Left ventricle myocardium inferior (tissue), 1 donor: ENCODE measurements at regions of chr7 and their contacts with region 1.

Region 1: DNA sequence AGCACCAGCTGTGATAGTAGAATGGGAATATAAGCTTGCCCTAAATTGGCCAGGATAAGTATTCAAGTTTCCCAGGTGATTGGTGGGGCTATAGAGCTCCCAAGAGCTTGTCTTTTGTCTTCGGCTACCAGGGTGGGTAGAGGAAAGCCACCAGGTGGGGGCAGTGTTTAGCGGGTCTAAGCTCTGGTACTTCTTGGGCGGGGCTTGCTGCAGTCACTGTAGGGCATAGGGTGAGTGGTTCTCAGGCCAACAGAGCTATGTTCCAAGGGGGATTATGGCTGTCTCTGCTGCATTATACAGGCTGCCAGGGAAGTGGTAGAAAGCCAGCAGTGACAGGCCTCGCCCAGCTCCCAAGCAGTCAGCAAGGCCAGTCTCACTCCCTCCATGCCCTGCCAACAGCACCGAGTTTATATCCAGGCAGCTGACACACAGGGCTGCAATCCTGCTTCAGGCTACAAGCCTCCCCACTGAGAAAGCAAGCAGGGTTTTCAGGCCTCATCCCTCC is 110.7 kb downstream of the ZNF467 start:
- DNase-seq: peak; percentile 61
- H3K4me3 ChIP-seq: no peak overlapping the region
- H3K27ac ChIP-seq: peak overlapping the region; percentile 63
- H3K4me1 ChIP-seq: peaks cover 3% of the 10 kb centered on the region
- H3K27me3 ChIP-seq: no peaks in the 10 kb centered on the region
- CTCF ChIP-seq: peak; percentile 59

Region 2: DNA sequence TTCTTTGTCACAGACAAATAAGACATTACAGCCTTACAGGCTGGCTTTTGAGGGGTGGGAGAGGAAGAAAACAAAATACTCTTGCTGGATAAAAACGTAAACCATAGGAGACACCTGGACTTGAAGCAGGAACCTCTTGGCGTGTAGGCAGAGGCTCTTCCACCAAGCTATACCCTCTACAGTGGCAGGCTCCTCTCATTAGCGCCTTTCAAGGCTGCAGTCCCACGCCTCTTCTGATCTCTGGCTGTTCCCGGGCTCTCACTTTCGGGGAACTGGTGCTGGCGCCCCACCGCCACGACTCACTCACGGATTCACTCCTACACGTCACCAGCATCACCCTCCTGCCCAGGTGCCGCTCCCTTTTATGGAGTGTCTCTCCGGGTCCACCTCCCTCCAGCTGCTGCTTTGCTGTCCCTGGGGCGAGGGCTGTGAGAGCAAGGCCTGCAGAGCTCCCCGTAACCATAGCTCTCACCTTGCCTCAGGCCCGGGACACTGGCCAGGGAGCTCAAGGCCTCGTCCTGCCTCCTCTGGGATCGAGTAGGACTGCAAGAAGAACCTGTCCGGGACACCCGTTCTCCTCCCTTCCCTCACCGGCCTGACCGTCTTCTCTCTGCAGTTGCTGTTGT is 264.3 kb before region 1 on chr7:
- intact Hi-C with region 1: no loop called
- DNase-seq: no peak
- H3K4me3 ChIP-seq: no peak overlapping the region
- H3K27ac ChIP-seq: no peak overlapping the region
- H3K4me1 ChIP-seq: no peaks in the 10 kb centered on the region
- H3K27me3 ChIP-seq: peaks cover 56% of the 10 kb centered on the region
- CTCF ChIP-seq: no peak

Region 3: DNA sequence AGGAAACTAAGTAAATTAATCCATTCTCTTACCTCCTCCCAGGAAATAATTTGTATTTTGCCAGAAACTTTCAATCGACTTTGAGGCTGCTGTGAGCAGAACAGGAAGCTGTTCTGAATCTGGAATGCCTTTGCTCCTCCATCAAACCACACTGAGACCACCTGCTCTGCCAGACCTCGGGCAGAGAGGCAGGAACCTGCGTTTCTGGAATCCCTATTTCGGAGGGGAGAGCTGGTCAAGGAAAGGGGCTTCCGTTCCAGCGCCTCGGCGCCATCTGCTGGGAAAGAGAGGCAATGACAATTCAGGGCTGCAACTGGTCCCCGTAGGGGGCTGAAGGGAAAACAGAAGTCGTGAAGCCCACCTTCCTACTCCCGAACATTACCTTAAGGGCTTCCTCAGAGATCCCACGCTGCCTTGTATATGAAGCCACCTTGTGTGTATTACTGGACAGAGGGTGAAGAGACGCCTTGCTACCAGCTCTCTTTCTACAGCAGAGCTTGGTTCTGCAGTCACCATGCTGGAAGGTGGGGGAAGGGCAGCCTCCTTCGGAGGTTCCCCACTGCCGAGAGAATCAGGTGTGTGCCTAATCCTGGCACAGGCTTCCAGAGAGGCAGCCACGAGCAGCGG is 79.5 kb after region 1 on chr7:
- intact Hi-C with region 1: loop called (anchors 10 kb)
- DNase-seq: peak; percentile 60
- H3K4me3 ChIP-seq: peak overlapping the region; percentile 60
- H3K27ac ChIP-seq: peak overlapping the region; percentile 52
- H3K4me1 ChIP-seq: peaks cover 12% of the 10 kb centered on the region
- H3K27me3 ChIP-seq: no peaks in the 10 kb centered on the region
- CTCF ChIP-seq: peak; percentile 94